ENCODE measurements at regions of chr16 and their contacts with region 1.

Region 1: DNA sequence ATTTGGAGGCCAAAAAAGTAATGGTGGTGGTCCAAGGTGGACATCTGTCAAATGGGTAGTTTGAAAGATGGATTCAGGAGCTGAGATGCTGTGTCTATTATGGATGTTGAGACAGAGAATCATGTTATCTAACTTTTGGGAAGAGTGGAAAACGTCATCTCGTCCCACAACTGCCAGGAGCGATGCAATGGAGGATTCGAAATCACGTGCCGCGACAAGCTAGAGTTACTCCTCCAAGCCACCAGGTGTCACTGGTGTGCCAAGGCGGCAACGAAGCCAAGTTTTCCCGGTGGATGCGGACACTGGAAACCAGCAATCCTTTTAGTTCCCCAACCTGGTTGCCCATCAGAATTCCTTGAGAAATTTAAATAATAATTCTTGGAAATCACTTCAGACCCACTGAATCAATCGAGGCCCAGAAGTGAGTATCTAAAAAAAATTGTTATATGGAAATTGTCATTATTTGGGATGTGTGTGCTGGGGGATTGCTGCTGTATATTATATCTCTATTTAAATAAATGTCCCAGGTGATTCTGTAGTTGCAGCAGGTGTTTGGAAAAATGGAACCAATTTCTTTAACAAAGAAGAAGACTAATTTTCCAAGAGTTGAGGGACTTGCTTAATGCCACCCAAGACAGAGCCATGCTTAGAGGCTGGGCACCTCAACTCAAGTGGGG is 206.1 kb downstream of the HAPSTR1 start:
- DNase-seq: peak; percentile 53
- H3K4me3 Mint-ChIP-seq: no peak overlapping the region
- H3K27ac Mint-ChIP-seq: no peak overlapping the region
- H3K4me1 Mint-ChIP-seq: peaks cover 9% of the 10 kb centered on the region
- H3K27me3 Mint-ChIP-seq: no peaks in the 10 kb centered on the region
- CTCF ChIP-seq: peak; percentile 82

Region 2: DNA sequence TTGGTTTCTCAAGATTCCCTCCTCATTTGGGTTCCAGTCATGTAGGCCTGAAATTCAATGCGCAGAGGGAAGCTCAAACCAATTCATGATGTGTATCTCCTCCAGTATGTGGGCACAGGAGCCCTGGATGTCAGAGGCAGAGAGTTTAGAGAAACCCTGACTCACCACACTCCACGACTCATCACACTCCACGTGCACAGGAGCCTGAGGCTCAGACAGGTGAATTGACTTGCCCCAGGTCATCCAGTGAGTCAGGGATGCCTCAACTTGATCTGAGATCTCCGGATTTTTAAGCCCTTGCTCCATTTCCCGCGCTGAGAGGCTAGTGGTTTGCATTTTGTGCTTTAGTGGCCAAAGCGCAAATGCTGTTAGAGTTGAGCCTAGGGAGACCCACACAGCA is 22.2 kb before region 1 on chr16:
- CTCF ChIA-PET with region 1: no interaction called
- intact Hi-C with region 1: no loop called
- DNase-seq: no peak
- H3K4me3 Mint-ChIP-seq: no peak overlapping the region
- H3K27ac Mint-ChIP-seq: no peak overlapping the region
- H3K4me1 Mint-ChIP-seq: no peaks in the 10 kb centered on the region
- H3K27me3 Mint-ChIP-seq: peaks cover 72% of the 10 kb centered on the region
- CTCF ChIP-seq: no peak

Region 3: GRCh38 chr16:9372934-9373890 is 75.6 kb after region 1 on chr16:
- CTCF ChIA-PET with region 1: no interaction called
- intact Hi-C with region 1: loop called (anchors 5 kb)
- DNase-seq: no peak
- H3K4me3 Mint-ChIP-seq: no peak overlapping the region
- H3K27ac Mint-ChIP-seq: no peak overlapping the region
- H3K4me1 Mint-ChIP-seq: peaks cover 10% of the 10 kb centered on the region
- H3K27me3 Mint-ChIP-seq: peaks cover 14% of the 10 kb centered on the region
- CTCF ChIP-seq: no peak

Region 4: DNA sequence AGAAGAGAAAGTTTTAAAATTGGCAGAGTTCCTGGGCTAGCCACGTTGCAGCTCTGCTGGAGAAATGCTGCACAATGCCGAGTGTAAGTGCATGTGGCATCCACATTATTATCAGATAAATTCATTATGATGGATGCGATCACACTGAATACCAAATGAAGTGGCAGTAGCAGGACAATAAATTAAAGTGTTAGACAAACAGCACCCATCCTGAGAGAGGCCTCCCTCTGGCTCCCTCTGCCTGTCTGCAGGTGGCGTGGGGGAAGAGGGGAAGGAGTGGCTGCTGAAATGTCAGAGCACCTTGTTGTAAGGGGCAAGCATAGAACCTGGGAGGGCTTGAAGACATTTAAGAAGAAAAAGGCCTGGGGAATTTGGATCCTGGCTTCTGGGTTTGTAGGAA is 118.0 kb after region 1 on chr16:
- CTCF ChIA-PET with region 1: no interaction called
- intact Hi-C with region 1: loop called (anchors 5 kb)
- DNase-seq: peak; percentile 17
- H3K4me3 Mint-ChIP-seq: no peak overlapping the region
- H3K27ac Mint-ChIP-seq: no peak overlapping the region
- H3K4me1 Mint-ChIP-seq: no peaks in the 10 kb centered on the region
- H3K27me3 Mint-ChIP-seq: peaks cover 86% of the 10 kb centered on the region
- CTCF ChIP-seq: no peak

Measured in Calu3 (cell line).